Activated CD4-positive, alpha-beta T cell treated with anti-CD3 and anti-CD28 coated beads, Interleukin-2, amount 10 ng/mL, durations not matched to agents 7 days and 5 days (primary cell): ENCODE measurements at regions of chr22 and their contacts with region 1.

Region 1: GRCh38 chr22:17171313-17172171 is 12.5 kb upstream of the HDHD5 start:
- DNase-seq: peak; percentile 76
- H3K4me3 Mint-ChIP-seq: peak overlapping the region; percentile 81
- H3K27ac Mint-ChIP-seq: peak overlapping the region; percentile 76
- H3K4me1 Mint-ChIP-seq: peaks cover 7% of the 10 kb centered on the region
- H3K27me3 Mint-ChIP-seq: peaks cover 4% of the 10 kb centered on the region

Region 2: DNA sequence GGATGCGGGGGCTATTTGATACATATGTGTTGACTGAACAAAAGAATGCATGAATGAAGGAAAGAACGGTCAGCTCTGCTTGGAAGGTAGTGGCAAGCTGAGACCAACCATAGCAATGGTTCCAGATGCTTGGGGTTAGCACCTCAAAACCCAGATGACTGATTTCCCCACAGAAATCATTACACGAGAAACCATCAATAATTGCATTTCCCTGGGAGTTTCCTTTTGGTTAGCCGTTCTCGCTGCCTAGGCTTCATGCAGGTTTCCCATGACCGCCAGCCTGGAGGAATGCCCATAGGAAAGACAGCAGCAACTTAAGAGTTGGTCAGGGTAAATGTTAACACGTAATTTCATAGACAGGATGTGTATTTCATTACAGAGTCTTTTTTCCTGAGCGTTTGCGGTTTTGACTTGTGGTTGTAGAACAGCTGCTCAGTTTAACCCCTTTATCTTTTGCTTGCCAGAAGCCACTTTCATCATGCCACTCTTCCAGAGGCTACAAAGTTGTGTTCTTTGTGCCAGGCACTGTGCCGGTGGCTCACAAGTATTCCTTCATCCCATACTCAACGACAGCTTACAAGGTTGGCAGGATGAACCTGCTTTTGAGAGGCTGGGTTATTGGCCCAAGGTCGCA is 83.9 kb before region 1 on chr22:
- CTCF ChIA-PET with region 1: interaction called, 10 read pairs
- POLR2A ChIA-PET with region 1: no interaction called
- DNase-seq: peak; percentile 83
- H3K4me3 Mint-ChIP-seq: peak overlapping the region; percentile 82
- H3K27ac Mint-ChIP-seq: peak overlapping the region; percentile 93
- H3K4me1 Mint-ChIP-seq: peaks cover 73% of the 10 kb centered on the region
- H3K27me3 Mint-ChIP-seq: no peaks in the 10 kb centered on the region

Region 3: DNA sequence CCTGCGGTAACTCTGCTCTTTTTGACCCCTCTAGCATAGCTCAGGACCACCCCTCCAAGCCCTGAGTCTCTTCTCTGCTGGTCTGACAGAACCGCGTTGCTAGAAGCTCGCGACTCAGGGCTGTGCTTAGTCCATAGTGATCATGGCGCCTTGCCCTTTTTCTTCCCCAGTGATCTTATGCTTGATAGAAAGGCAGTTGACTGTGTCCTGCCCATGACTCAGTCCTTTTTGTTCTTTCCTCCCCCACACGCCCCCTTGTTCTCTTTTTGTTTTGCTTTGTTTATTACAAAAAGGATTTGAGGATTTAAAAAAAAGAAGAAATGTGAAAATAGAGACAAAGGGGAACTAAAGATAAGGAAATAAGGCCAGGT is 69.3 kb before region 1 on chr22:
- CTCF ChIA-PET with region 1: interaction called, 11 read pairs
- POLR2A ChIA-PET with region 1: no interaction called
- DNase-seq: no peak
- H3K4me3 Mint-ChIP-seq: no peak overlapping the region
- H3K27ac Mint-ChIP-seq: no peak overlapping the region
- H3K4me1 Mint-ChIP-seq: peaks cover 87% of the 10 kb centered on the region
- H3K27me3 Mint-ChIP-seq: no peaks in the 10 kb centered on the region

Region 4: DNA sequence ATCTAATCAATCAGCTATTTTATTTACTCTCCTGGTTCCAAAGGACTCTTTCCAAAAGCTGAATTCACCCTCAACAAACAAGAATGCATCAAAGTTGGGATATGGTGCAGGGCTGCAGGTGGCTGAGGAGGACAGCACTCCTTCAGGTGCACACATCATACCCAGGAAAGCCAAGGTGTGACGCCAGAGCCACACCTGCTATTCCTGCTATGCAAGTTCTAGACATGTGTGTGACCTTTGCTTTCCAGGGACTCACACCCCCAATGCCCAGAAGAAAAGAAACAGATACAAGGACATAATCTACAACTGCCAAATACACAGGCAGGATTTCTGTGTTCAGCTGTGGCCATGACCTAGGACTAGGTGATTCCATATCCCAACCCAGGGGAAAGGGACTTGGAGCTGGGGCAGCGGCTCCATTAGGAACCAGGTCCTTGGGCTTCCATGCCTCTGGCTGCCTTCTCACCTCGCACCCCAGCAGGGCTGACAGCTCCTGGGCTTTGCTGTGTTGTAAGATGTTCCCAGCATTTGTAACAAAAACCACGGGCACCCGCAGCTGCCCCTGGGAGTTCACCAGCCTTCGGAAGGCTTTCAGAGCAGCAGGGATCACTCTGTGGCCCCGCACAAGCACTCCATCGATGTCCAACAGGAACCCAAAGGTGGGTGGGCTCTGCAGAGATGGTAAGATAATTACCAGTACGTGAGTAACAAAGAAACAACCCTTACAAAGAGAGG is 22.3 kb before region 1 on chr22:
- CTCF ChIA-PET with region 1: interaction called, 19 read pairs
- POLR2A ChIA-PET with region 1: no interaction called
- DNase-seq: no peak
- H3K4me3 Mint-ChIP-seq: no peak overlapping the region
- H3K27ac Mint-ChIP-seq: no peak overlapping the region
- H3K4me1 Mint-ChIP-seq: peaks cover 15% of the 10 kb centered on the region
- H3K27me3 Mint-ChIP-seq: no peaks in the 10 kb centered on the region

Region 5: DNA sequence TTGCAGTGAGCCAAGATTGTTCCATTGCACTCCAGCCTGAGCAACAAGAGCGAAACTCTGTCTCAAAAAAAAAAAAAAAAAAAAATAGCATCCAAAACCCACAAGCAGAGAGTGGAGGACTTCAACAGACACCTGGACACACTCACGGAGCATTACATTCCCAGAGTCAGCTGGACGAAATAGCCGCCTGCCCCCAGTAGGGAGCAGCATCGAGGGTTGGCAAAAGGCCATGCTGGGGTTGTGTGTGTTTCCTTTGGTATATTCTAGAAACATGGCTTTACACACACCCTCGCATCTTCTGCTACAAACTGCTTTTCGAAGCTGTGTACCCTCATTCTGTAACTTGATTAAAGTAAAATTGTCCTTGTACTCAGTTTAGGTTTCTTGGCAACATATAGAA is 42.4 kb after region 1 on chr22:
- CTCF ChIA-PET with region 1: interaction called, 16 read pairs
- POLR2A ChIA-PET with region 1: no interaction called
- DNase-seq: peak; percentile 49
- H3K4me3 Mint-ChIP-seq: no peak overlapping the region
- H3K27ac Mint-ChIP-seq: peak overlapping the region; percentile 60
- H3K4me1 Mint-ChIP-seq: peaks cover 45% of the 10 kb centered on the region
- H3K27me3 Mint-ChIP-seq: no peaks in the 10 kb centered on the region

Region 6: GRCh38 chr22:17281440-17281841 is 109.9 kb after region 1 on chr22:
- CTCF ChIA-PET with region 1: interaction called, 10 read pairs
- POLR2A ChIA-PET with region 1: no interaction called
- DNase-seq: peak; percentile 62
- H3K4me3 Mint-ChIP-seq: peak overlapping the region; percentile 8
- H3K27ac Mint-ChIP-seq: peak overlapping the region; percentile 85
- H3K4me1 Mint-ChIP-seq: peaks cover 28% of the 10 kb centered on the region
- H3K27me3 Mint-ChIP-seq: peaks cover 9% of the 10 kb centered on the region